Transverse colon (tissue), 4 donors: ENCODE measurements at regions of chr4 and their contacts with region 1.

Region 1: DNA sequence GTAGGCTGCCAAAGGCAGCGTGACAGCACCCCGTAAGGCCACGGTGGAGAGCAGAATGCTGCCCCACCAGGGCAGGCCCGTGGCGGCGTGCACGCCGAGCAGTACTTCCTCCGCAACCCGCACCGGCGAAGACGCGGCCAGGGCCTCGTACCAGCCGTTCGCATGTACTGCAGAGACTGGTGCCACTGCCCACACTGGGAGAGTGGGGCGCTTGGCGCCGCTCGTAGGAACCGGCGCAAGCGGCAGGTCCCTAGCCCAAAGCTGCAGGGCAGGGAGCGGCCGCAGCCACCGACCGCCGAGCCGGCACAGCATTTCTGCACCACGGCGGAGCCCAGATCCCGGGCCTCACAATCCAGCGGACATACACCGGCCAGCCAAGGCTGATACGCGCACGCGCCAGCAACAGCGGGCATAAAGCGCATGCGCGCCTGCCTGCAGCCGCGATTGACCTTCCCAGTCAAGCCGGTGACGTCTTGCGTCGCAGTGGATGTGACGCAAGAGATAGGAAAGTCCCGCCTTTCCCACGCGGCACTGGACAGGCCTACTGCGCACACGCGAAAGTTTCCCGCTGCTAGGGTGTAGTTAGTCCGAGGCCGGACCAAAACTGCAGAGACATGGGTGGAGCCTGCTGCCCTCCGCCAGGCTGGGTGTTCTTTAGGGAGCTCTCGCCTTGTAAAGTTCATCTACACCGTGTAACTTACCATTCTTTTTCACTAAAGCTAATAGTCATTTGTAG is at the start of gene COX18:
- DNase-seq: peak; percentile 98
- H3K4me3 ChIP-seq: peak within 1 kb of the TSS; percentile 55 to 88 (median 74)
- H3K27ac ChIP-seq: peak within 1 kb of the TSS; percentile 92 to 99 (median 97)
- H3K4me1 ChIP-seq: peaks cover 0 to 32% (median 3%) of the 10 kb centered on the region in 4 donors
- H3K27me3 ChIP-seq: no peaks in the 10 kb centered on the region
- CTCF ChIP-seq: peak in 3 of 5 experiments; percentile 9 to 32 (median 12)
- EP300 ChIP-seq: no peak
- POLR2A ChIP-seq: peak; percentile 96
- total RNA-seq, gene COX18: 10.9 to 20.1 (median 18.4) TPM

Region 2: GRCh38 chr4:73258686-73259570 is 189.4 kb after region 1 on chr4 and contains the start of gene ANKRD17:
- in situ Hi-C with region 1: loop called in 3 of 4 experiments (anchors 10 to 25 kb)
- intact Hi-C with region 1: loop called (anchors 1 kb)
- DNase-seq: peak; percentile 96
- H3K4me3 ChIP-seq: peak within 1 kb of the TSS; percentile 83 to 94 (median 88)
- H3K27ac ChIP-seq: peak within 1 kb of the TSS; percentile 96 to 99 (median 98)
- H3K4me1 ChIP-seq: peaks cover 16 to 52% (median 39%) of the 10 kb centered on the region in 4 donors
- H3K27me3 ChIP-seq: no peaks in the 10 kb centered on the region
- CTCF ChIP-seq: peak in 4 of 5 experiments; percentile 38 to 81 (median 54)
- EP300 ChIP-seq: peak; percentile 38
- POLR2A ChIP-seq: peak; percentile 94
- total RNA-seq, gene ANKRD17: 69.9 to 93.1 (median 74.3) TPM